ENCODE measurements at regions of chr22 and their contacts with region 1.

Region 1: GRCh38 chr22:38051900-38052862 is 5.0 kb upstream of the PICK1 start:
- DNase-seq: peak; percentile 75
- ATAC-seq: peak; percentile 87
- H3K4me3 Mint-ChIP-seq: no peak overlapping the region
- H3K27ac Mint-ChIP-seq: no peak overlapping the region
- H3K4me1 Mint-ChIP-seq: peaks cover 14% of the 10 kb centered on the region
- H3K27me3 Mint-ChIP-seq: peaks cover 13% of the 10 kb centered on the region
- CTCF ChIP-seq: peak; percentile 75

Region 2: DNA sequence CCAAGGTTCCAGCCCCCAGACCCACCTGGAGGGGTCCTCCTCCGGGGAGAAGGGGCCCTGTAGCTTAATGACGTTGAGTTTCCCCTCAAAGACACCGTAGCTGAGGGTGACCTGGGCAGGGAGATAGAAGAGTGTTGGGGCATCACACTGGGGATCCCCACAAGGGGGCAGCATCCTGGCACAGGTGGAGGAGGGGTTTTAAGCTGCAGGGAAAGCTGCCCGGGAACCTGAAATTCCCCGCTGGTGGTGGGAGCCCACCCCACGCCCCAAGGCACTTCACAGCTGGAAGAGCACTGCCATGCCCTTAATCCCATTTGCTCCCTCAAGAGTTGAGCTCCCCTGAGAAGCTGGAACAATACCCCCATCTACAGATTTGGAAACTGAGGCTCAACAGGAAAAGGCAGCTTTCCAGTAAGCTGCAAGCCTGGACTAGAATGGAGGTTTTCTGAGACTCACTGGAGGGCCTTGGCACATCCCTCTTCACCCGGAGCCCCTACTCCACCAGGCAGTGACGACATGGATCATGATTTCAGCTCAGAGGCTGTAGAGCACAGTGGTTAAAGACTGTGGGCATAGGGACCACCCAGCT is 579.7 kb before region 1 on chr22:
- CTCF ChIA-PET with region 1: no interaction called
- POLR2A ChIA-PET with region 1: no interaction called
- intact Hi-C with region 1: no loop called
- DNase-seq: no peak
- ATAC-seq: peak; percentile 47
- H3K4me3 Mint-ChIP-seq: no peak overlapping the region
- H3K27ac Mint-ChIP-seq: no peak overlapping the region
- H3K4me1 Mint-ChIP-seq: peaks cover 5% of the 10 kb centered on the region
- H3K27me3 Mint-ChIP-seq: no peaks in the 10 kb centered on the region
- CTCF ChIP-seq: no peak

Region 3: GRCh38 chr22:38201710-38202436 is 149.7 kb after region 1 on chr22 and contains the start of gene MAFF:
- CTCF ChIA-PET with region 1: interaction called, 4 read pairs
- POLR2A ChIA-PET with region 1: interaction called, 6 read pairs
- intact Hi-C with region 1: loop called (anchors 10 kb)
- DNase-seq: peak; percentile 73
- ATAC-seq: peak; percentile 75
- H3K4me3 Mint-ChIP-seq: peak within 1 kb of the TSS; percentile 86
- H3K27ac Mint-ChIP-seq: peak within 1 kb of the TSS; percentile 35
- H3K4me1 Mint-ChIP-seq: peaks cover 51% of the 10 kb centered on the region
- H3K27me3 Mint-ChIP-seq: no peaks in the 10 kb centered on the region
- CTCF ChIP-seq: no peak
- total RNA-seq, gene MAFF: 2.3 and 4.5 TPM in 2 replicates

Region 4: DNA sequence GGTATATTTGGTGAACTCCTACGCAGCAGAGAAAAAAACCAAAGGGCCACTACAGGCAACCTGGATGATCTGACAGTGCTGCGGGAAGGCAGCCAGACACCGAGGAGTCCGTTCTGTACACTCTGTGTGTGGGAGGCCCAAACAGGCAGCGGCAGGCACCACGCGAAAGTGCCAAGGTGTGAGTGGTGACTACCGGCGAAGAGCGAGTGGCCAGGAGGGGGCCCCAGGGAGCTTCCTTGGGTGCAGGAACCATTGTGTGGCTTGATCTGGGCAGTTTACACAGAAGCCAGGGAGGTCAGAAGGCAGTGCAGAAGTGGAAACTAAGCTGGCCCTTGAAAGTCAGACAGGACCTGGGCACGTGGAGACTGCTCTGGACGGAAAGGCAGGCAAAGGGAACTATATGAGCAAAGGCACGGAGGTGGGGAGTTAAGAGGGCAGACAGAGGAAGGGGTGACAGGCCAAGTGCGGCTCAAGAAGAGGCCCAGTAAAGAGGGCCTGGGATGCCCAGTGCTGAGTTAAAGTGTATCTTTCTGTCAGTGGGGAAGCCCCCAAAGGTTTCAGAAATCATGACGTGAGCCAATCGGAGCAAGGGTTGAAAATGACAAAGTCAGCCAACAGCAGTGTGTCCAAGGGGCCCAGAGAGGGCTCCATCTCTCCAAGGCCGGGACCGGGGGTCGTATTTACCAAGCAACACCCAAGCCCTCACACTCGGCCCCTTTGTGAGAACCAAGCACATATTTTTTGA is 210.0 kb after region 1 on chr22:
- CTCF ChIA-PET with region 1: interaction called, 13 read pairs
- POLR2A ChIA-PET with region 1: interaction called, 7 read pairs
- intact Hi-C with region 1: loop called (anchors 1 kb)
- DNase-seq: peak; percentile 34
- ATAC-seq: peak; percentile 38
- H3K4me3 Mint-ChIP-seq: no peak overlapping the region
- H3K27ac Mint-ChIP-seq: peak overlapping the region; percentile 57
- H3K4me1 Mint-ChIP-seq: peaks cover 44% of the 10 kb centered on the region
- H3K27me3 Mint-ChIP-seq: no peaks in the 10 kb centered on the region
- CTCF ChIP-seq: no peak

Region 5: GRCh38 chr22:38513063-38513462 is 460.9 kb after region 1 on chr22:
- CTCF ChIA-PET with region 1: interaction called, 12 read pairs
- POLR2A ChIA-PET with region 1: no interaction called
- intact Hi-C with region 1: loop called (anchors 1 kb)
- DNase-seq: no peak
- ATAC-seq: peak; percentile 79
- H3K4me3 Mint-ChIP-seq: no peak overlapping the region
- H3K27ac Mint-ChIP-seq: no peak overlapping the region
- H3K4me1 Mint-ChIP-seq: peaks cover 1% of the 10 kb centered on the region
- H3K27me3 Mint-ChIP-seq: no peaks in the 10 kb centered on the region
- CTCF ChIP-seq: no peak

Region 6: DNA sequence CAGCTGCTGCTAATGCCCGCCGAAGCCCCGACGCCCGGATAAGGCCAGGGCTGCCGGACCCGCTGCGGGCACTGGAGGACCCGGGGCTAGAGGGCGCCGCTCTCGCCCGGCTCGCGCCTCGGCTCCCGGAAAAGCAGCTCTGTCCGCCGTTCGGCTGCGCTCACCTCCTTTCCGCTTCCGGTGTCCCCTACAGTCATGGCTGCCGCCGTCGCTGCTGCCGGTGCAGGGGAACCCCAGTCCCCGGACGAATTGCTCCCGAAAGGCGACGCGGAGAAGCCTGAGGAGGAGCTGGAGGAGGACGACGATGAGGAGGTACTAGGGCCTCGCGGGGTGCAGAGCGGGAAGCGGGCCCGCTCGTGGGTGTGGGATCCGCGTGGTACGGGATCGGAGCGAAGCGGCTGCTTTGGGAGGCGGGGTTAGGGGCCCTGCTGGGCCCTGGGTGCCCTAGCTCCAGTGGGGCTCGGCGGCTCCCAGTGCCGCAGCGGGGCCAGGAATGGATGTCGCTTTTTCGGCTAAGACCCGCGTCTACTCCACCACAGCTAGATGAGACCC is 629.7 kb after region 1 on chr22 and contains the start of gene TOMM22:
- CTCF ChIA-PET with region 1: interaction called, 15 read pairs
- POLR2A ChIA-PET with region 1: interaction called, 11 read pairs
- intact Hi-C with region 1: loop called (anchors 1 kb)
- DNase-seq: peak; percentile 84
- ATAC-seq: peak; percentile 98
- H3K4me3 Mint-ChIP-seq: peak within 1 kb of the TSS; percentile 97
- H3K27ac Mint-ChIP-seq: peak within 1 kb of the TSS; percentile 92
- H3K4me1 Mint-ChIP-seq: peaks cover 20% of the 10 kb centered on the region
- H3K27me3 Mint-ChIP-seq: no peaks in the 10 kb centered on the region
- CTCF ChIP-seq: no peak
- total RNA-seq, gene TOMM22: 99.4 and 109 TPM in 2 replicates

Measured in activated B cell treated with CpG ODN at 0.5 μM for 24 hours (primary cell).